ENCODE measurements at regions of chr4 and their contacts with region 1.

Region 1: DNA sequence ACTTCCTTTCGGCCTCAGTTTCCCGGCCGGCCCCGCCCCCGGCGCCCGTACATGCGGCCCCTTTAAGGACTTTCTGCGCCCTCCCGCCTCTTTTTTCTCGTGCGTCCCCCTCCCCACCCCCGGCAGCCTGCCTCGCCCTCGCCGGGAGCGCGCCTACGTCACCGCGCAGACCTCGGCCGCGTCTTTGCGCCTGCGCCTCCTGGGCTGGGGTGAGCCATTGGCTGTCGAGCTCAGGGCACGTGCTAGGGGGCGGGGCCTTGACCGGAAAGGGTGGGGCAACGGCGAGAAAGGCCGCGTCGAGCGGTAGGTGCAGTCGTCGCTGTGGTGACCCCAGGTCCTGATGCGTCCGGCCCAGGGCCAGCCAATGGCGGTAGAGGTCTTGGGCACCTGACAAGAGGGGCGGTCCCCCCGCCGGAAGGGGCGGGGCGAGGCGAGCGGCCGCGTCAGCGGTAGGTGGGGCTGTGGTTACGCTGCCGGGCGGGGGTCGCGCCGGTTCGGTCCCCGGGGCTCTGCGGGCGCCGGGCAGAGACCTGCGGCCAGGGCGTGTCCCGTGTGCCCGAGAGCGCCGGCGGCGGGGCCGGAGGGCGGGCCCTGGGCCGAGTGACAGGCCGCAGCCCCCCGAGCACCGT is at the start of gene UVSSA:
- DNase-seq: peak; percentile 99 to 100 (median 100)
- ATAC-seq: peak; percentile 87 to 96 (median 90)
- H3K4me3 ChIP-seq: peak within 1 kb of the TSS; percentile 82 to 97 (median 84)
- H3K27ac ChIP-seq: peak within 1 kb of the TSS; percentile 95 to 98 (median 96)
- H3K4me1 ChIP-seq: peaks cover 7 to 13% (median 8%) of the 10 kb centered on the region in 3 donors
- H3K27me3 ChIP-seq: no peaks in the 10 kb centered on the region
- CTCF ChIP-seq: no peak
- total RNA-seq, gene UVSSA: 9.2 to 24.7 (median 12.4) TPM

Region 2: DNA sequence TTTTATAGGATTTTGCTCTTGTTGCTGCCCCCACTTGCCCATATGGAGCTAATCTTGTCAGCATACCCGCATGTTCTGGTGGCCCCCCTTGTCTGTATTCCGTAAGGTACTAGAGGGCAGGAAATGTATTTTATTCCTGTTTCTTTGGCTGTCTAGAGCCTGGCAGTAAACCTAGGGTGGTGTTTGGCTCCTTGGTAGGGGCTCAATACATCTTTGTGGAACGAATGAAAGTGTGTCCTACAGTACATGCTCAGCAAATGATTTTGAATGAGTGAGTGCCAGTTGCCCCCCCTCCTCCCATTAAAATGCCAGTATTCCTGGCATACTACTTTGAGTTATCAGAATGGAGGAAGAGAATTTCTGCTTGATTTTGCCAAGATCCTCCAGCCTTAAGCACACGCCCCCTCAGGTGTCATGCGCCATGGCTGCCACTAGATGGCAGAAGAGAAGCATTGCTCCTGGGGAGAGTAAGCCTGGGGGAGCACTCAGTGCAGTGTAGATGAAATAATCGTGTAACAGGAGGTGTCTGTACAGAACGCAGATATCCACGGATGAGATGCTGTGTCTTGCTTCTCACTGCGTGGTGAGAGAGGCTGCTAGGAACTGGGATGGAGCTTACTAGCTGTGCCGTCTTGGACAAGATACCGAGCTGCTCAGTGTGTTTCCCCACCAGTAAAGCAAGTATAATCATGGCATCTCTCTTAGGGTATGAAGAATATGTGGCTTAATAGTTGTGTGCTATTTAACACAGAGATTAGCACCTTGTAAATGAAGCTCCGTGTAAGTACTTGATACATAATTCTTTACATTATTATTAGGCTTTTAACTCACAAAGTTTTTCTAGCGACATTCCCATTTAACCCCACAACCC is 216.3 kb before region 1 on chr4:
- intact Hi-C with region 1: loop called in 1 of 3 experiments (anchors 10 kb)
- DNase-seq: peak; percentile 67 to 87 (median 80)
- ATAC-seq: peak; percentile 78 to 95 (median 86)
- H3K4me3 ChIP-seq: no peak overlapping the region
- H3K27ac ChIP-seq: no peak overlapping the region
- H3K4me1 ChIP-seq: peaks cover 0 to 13% (median 9%) of the 10 kb centered on the region in 3 donors
- H3K27me3 ChIP-seq: no peaks in the 10 kb centered on the region
- CTCF ChIP-seq: peak; percentile 96 to 99 (median 98)

Region 3: DNA sequence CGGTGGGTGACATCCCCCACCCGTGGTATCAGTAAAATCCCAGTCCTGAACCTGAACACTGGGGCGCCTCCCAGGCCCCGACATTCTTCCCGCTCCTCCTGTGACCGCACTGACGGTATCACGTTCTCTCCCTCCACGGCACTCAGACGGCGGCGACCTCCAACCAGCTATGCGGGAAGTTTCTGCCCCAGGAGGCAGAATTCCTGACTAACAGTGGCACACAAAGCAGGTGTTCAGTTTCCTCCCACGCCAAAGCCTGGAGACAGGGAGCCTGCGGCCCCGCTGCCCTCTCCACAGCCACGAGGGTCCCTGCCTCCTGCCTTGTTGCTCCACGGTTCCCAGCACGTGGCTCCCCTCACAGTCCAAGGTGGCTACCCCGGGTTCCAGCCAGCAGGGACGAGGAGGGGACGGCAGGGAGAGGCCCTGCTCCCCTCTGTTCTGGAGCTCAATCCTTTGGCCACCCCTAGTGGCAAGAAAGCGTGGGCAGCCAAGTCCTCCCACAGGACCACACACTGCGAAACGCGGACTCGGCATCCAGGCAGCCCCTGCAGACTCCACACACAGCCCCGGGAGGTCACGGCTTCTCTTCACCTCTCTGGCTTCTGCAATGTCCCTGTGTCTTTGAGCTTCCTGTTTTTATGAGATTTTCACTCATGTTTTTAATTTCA is 113.1 kb before region 1 on chr4:
- intact Hi-C with region 1: no loop called
- DNase-seq: peak in 4 of 6 donors; percentile 4 to 70 (median 37)
- ATAC-seq: peak in 3 of 4 donors; percentile 16 to 33 (median 17)
- H3K4me3 ChIP-seq: no peak overlapping the region
- H3K27ac ChIP-seq: no peak overlapping the region
- H3K4me1 ChIP-seq: no peaks in the 10 kb centered on the region
- H3K27me3 ChIP-seq: no peaks in the 10 kb centered on the region
- CTCF ChIP-seq: no peak

Region 4: DNA sequence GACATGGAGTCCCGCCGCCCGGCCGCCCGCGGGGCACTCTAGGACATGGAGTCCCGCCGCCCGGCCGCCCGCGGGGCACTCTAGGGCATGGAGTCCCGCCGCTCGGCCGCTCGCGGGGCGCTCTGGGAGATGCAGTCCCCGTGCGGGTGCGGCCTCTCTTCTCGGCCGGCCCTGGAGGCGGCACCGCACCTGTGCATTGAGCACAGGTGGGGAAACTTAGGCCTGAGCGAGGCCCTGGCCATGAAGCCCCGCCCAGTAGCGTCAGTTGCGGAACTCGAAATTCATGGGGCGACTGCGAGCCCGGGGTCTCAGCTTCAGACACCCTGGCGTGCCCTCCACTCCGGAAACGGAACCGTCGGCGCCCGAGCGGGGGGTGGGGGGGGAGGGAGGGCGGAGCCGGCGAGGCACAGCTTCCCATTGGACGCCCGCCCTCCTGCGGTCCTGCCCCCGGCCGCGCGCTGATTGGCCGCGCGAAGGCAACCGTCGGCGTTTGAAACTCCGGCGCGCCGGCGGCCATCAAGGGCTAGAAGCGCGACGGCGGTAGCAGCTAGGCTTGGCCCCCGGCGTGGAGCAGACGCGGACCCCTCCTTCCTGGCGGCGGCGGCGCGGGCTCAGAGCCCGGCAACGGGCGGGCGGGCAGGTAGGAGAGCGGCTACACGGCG is 374.2 kb after region 1 on chr4 and contains the starts of genes TACC3 and TMEM129:
- intact Hi-C with region 1: no loop called
- DNase-seq: peak; percentile 93 to 99 (median 98)
- ATAC-seq: peak; percentile 80 to 92 (median 88)
- H3K4me3 ChIP-seq: peak within 1 kb of the TSS; percentile 42 to 71 (median 55)
- H3K27ac ChIP-seq: peak within 1 kb of the TSS; percentile 77 to 90 (median 81)
- H3K4me1 ChIP-seq: peaks cover 0 to 29% (median 28%) of the 10 kb centered on the region in 3 donors
- H3K27me3 ChIP-seq: no peaks in the 10 kb centered on the region
- CTCF ChIP-seq: no peak
- total RNA-seq, gene TACC3: 0.97 to 4.4 (median 2.4) TPM
- total RNA-seq, gene TMEM129: 17.2 to 27.1 (median 18.9) TPM